ENCODE measurements at regions of chr21 and their contacts with region 1.

Region 1: GRCh38 chr21:39924577-39925308 is 57.5 kb downstream of the PCP4 start:
- DNase-seq: peak in 1 of 2 experiments; percentile 52
- H3K4me3 ChIP-seq: no peak overlapping the region
- H3K27ac ChIP-seq: no peak overlapping the region
- H3K4me1 ChIP-seq: peaks cover 0 to 3% (median 0%) of the 10 kb centered on the region in 4 experiments; a peak in 2 of 7 replicates
- H3K27me3 ChIP-seq: no peaks in the 10 kb centered on the region
- CTCF ChIP-seq: peak; percentile 39 to 47 (median 45)
- EP300 ChIP-seq: no peak
- POLR2A ChIP-seq: no peak
- RAD21 ChIP-seq: peak; percentile 21 to 40; a peak in 2 of 4 replicates

Region 2: GRCh38 chr21:39840373-39841097 is 84.2 kb before region 1 on chr21:
- CTCF ChIA-PET with region 1: no interaction called
- POLR2A ChIA-PET with region 1: no interaction called
- DNase-seq: no peak
- H3K4me3 ChIP-seq: no peak overlapping the region
- H3K27ac ChIP-seq: no peak overlapping the region
- H3K4me1 ChIP-seq: peaks cover 0 to 7% (median 0%) of the 10 kb centered on the region in 4 experiments; a peak in 1 of 7 replicates
- H3K27me3 ChIP-seq: no peaks in the 10 kb centered on the region
- CTCF ChIP-seq: no peak
- EP300 ChIP-seq: no peak
- POLR2A ChIP-seq: no peak
- RAD21 ChIP-seq: no peak

Region 3: GRCh38 chr21:39874759-39875158 is 50.0 kb before region 1 on chr21:
- CTCF ChIA-PET with region 1: no interaction called
- POLR2A ChIA-PET with region 1: no interaction called
- DNase-seq: no peak
- H3K4me3 ChIP-seq: no peak overlapping the region
- H3K27ac ChIP-seq: no peak overlapping the region
- H3K4me1 ChIP-seq: 0 out of 7 replicates have a peak, but pooled peaks cover 0 to 2% (median 0%) of the 10 kb centered on the region in 4 experiments
- H3K27me3 ChIP-seq: no peaks in the 10 kb centered on the region
- CTCF ChIP-seq: no peak
- EP300 ChIP-seq: no peak
- POLR2A ChIP-seq: no peak
- RAD21 ChIP-seq: no peak

Region 4: GRCh38 chr21:39911286-39912199 is 13.2 kb before region 1 on chr21:
- CTCF ChIA-PET with region 1: interaction called, 16 read pairs
- POLR2A ChIA-PET with region 1: no interaction called
- DNase-seq: no peak
- H3K4me3 ChIP-seq: no peak overlapping the region
- H3K27ac ChIP-seq: no peak overlapping the region
- H3K4me1 ChIP-seq: peaks cover 0 to 4% (median under 1%) of the 10 kb centered on the region in 4 experiments; a peak in 2 of 7 replicates
- H3K27me3 ChIP-seq: no peaks in the 10 kb centered on the region
- CTCF ChIP-seq: peak; percentile 20 to 47 (median 40)
- EP300 ChIP-seq: no peak
- POLR2A ChIP-seq: no peak
- RAD21 ChIP-seq: peak; percentile 52 to 65

Region 5: DNA sequence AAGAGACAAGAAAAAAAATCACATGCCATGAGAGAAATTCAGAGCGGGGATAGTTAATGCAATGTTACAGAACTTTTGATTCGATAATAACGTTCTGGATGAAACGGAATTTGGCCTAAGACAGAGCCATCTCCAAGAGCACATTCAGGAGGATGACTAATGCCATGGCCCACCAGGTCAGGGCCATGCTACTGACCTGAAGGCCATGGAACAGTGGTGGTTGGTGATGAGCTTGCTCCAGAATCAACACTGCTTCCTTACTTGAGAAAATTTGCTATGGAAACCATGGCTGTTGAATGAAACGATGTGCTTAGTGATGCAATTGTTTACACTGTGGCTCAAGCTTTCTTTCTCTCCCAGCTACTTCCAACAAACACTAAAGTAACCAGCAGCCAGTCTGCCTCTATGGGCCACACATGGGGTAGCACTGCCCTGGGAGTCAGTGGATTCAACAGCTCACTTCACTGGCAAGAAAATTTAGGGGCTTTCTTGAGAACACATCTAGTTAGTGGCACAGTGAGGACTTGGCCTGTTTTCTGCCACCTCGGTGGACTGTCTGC is 241.6 kb after region 1 on chr21:
- CTCF ChIA-PET with region 1: no interaction called
- POLR2A ChIA-PET with region 1: no interaction called
- DNase-seq: no peak
- H3K4me3 ChIP-seq: no peak overlapping the region
- H3K27ac ChIP-seq: no peak overlapping the region
- H3K4me1 ChIP-seq: peaks cover 3 to 19% (median 11%) of the 10 kb centered on the region in 4 experiments
- H3K27me3 ChIP-seq: no peaks in the 10 kb centered on the region; a peak in 1 of 7 replicates
- CTCF ChIP-seq: peak; percentile 23 to 40 (median 37)
- EP300 ChIP-seq: no peak
- POLR2A ChIP-seq: no peak
- RAD21 ChIP-seq: peak; percentile 10 to 34; a peak in 3 of 4 replicates

Region 6: DNA sequence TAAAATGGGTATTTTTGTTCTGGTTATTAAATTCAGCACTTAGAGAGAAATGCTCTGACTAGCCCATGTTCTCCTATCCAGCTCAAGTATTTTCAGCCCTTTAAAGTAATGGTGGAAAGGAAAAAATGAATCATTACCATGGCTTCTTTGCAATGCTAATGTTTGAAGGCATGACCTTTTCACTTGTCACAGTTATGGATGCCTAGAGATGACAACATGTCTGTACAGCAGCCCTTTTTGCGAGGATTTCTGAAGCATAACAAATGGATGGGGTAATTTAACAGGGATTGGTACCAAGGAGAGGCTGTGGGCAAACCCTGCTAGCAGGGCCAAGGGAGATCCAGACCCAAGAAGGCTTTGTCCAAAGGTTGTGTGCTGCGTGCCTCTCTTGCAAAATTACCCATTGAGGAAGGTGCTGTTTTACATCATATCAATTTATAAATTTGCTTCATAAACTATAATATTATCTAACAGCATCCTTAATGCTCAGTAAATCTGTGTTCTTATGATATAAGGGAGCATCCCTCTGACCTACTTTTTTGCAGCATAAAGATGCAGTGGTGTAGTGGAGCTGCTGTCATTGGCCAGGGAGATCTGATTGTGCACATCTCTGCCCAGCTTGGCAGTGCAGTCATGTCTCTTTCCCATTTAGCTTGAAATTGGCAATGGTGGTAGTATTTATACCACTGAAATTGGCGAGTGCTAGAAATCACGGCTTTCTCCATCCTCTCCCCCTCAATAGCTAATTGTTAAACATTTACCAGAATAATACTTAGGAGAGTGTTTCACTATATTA is 269.6 kb after region 1 on chr21:
- CTCF ChIA-PET with region 1: no interaction called
- POLR2A ChIA-PET with region 1: no interaction called
- DNase-seq: no peak
- H3K4me3 ChIP-seq: no peak overlapping the region
- H3K27ac ChIP-seq: no peak overlapping the region
- H3K4me1 ChIP-seq: no peaks in the 10 kb centered on the region
- H3K27me3 ChIP-seq: no peaks in the 10 kb centered on the region
- CTCF ChIP-seq: no peak
- EP300 ChIP-seq: no peak
- POLR2A ChIP-seq: no peak
- RAD21 ChIP-seq: no peak